CD4-positive, alpha-beta memory T cell (primary cell): ENCODE measurements at regions of chr3 and their contacts with region 1.

Region 1: GRCh38 chr3:71039332-71039731 is 544.2 kb downstream of the FOXP1 start:
- DNase-seq: peak in 4 of 5 donors; percentile 38 to 57 (median 50)
- H3K4me3 ChIP-seq: no peak overlapping the region
- H3K4me3 Mint-ChIP-seq: peak overlapping the region; percentile 0 to 75 (median 56)
- H3K27ac ChIP-seq: peak overlapping the region; percentile 4
- H3K27ac Mint-ChIP-seq: peak overlapping the region; percentile 12 to 88 (median 70)
- H3K4me1 ChIP-seq: peaks cover 66% of the 10 kb centered on the region
- H3K4me1 Mint-ChIP-seq: peaks cover 56 to 89% (median 70%) of the 10 kb centered on the region in 4 donors
- H3K27me3 ChIP-seq: no peaks in the 10 kb centered on the region
- H3K27me3 Mint-ChIP-seq: no peaks in the 10 kb centered on the region

Region 2: GRCh38 chr3:70959506-70960286 is 79.6 kb before region 1 on chr3:
- CTCF ChIA-PET with region 1: no interaction called
- POLR2A ChIA-PET with region 1: no interaction called
- intact Hi-C with region 1: no loop called
- DNase-seq: no peak
- H3K4me3 ChIP-seq: no peak overlapping the region
- H3K4me3 Mint-ChIP-seq: no peak overlapping the region
- H3K27ac ChIP-seq: no peak overlapping the region
- H3K27ac Mint-ChIP-seq: peak overlapping the region in 3 of 7 donors; percentile 59 to 74 (median 74)
- H3K4me1 ChIP-seq: no peaks in the 10 kb centered on the region
- H3K4me1 Mint-ChIP-seq: peaks cover 0 to 4% (median 3%) of the 10 kb centered on the region in 4 donors
- H3K27me3 ChIP-seq: no peaks in the 10 kb centered on the region
- H3K27me3 Mint-ChIP-seq: no peaks in the 10 kb centered on the region

Region 3: DNA sequence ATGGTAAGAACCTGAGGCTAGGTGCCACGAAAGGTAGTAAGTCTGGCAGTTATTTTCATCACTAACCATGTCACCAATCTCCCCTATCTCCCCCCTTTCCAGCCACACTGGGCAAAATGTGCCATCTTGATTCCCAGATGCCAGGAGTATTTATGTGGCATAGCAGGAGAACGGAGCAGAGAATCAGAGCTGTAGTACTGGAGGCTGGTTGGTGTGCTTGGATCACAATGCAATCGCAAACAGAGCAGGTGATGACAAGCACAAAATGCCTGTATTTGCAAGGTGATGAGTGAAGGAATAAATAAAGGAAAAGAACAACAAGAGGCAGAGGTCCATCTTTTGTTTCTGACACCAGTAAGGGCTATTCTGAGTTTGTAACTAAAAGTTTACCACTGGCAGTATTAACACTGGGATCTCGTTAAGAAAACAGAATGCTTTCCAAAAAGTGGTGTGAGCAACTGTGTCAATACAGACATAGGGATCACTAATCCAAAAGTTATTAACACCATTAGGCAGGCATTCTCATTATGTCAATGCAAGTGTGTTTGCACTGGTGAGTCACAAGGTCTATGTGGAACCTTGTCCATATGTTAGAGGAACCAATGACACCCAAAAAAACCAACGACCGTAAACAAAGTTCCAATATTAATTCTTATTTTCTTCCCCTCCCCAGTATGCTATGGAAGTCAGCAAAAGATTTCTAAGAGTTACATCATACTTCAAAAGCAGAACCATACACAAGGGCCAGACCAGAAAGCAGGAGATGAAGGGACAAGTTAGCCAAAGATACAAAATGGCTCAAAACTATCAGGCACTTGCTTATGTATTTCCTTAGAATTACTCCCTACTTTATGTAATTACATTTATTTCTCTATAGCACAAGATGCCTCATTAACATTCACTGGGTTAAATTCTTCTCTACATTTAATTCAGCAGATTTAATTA is 12.4 kb before region 1 on chr3:
- CTCF ChIA-PET with region 1: interaction called, 4 read pairs
- POLR2A ChIA-PET with region 1: interaction called, 3 read pairs
- intact Hi-C with region 1: loop called (anchors 2 kb)
- DNase-seq: no peak
- H3K4me3 ChIP-seq: no peak overlapping the region
- H3K4me3 Mint-ChIP-seq: peak overlapping the region in 2 of 8 donors; percentile 7 to 29
- H3K27ac ChIP-seq: no peak overlapping the region
- H3K27ac Mint-ChIP-seq: peak overlapping the region; percentile 21 to 80 (median 33)
- H3K4me1 ChIP-seq: peaks cover 63% of the 10 kb centered on the region
- H3K4me1 Mint-ChIP-seq: peaks cover 58 to 96% (median 81%) of the 10 kb centered on the region in 4 donors
- H3K27me3 ChIP-seq: no peaks in the 10 kb centered on the region
- H3K27me3 Mint-ChIP-seq: no peaks in the 10 kb centered on the region

Region 4: DNA sequence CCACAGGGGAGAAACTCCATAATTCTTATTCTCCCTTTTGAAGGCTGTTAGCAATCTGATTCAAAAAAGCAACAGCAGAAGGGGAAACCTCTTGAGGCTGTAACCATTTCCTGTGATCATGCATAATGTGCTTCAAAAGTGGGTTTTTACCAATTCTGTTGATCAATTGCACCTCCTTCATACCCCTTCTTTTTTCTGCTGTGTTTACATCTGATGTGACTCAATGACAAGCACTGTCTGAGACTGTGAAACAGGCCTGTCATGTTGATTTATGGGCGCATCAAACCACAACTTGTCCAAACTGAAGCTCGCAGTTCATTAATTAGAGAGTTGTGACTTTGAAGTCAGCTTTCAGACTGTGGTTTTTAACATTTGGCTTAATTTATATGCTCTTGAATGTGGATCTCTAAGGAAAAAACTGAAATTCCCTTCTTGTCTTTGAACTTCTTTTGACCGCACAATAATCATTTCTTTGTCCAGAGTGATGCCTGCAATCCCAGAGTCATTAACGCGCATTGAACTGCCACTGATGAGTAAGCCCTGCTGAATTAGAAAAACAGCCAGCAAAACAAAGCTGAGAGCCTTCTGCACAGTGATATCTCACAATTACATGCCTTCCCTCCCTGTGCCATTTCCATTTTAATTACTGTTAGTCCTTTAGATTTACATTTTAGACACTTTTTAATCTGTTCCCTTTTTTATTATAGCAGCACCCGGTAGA is 11.4 kb after region 1 on chr3:
- CTCF ChIA-PET with region 1: no interaction called
- POLR2A ChIA-PET with region 1: interaction called, 4 read pairs
- intact Hi-C with region 1: loop called (anchors 1 kb)
- DNase-seq: peak; percentile 64 to 83 (median 74)
- H3K4me3 ChIP-seq: no peak overlapping the region
- H3K4me3 Mint-ChIP-seq: peak overlapping the region in 7 of 8 donors; percentile 26 to 83 (median 66)
- H3K27ac ChIP-seq: peak overlapping the region; percentile 33
- H3K27ac Mint-ChIP-seq: peak overlapping the region; percentile 85 to 97 (median 94)
- H3K4me1 ChIP-seq: peaks cover 100% of the 10 kb centered on the region
- H3K4me1 Mint-ChIP-seq: peaks cover 0 to 99% (median 87%) of the 10 kb centered on the region in 4 donors
- H3K27me3 ChIP-seq: no peaks in the 10 kb centered on the region
- H3K27me3 Mint-ChIP-seq: no peaks in the 10 kb centered on the region